Activated CD8-positive, alpha-beta T cell treated with anti-CD3 and anti-CD28 coated beads for 36 hours (primary cell): ENCODE measurements at regions of chr17 and their contacts with region 1.

Region 1: GRCh38 chr17:39199820-39200069 is 338 bp upstream of the RPL19 start:
- DNase-seq: peak; percentile 98
- ATAC-seq: peak; percentile 64
- H3K4me3 Mint-ChIP-seq: peak overlapping the region; percentile 90
- H3K27ac Mint-ChIP-seq: peak overlapping the region; percentile 99
- H3K4me1 Mint-ChIP-seq: peaks cover 53% of the 10 kb centered on the region
- H3K27me3 Mint-ChIP-seq: no peaks in the 10 kb centered on the region
- CTCF ChIP-seq: no peak

Region 2: DNA sequence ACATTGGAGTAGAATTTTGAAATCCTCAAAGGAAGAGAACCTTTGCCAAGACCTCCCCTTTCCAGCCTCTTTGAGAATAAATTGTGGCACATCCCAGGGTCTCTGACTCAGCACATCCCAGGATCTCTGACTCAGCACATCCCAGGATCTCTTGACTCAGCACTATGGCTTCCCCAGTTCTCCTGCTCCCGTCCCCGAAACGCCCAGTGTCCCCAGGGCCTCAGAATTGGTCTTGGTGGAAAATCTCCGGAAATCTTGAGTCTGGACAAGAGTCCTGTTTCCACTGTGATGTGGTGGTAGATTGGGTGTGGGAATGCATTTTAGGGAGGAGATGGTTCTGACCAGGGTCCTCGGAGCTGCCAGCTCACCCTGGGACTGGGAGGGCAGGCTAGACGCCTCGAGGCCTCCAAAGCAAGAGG is 67.5 kb before region 1 on chr17:
- CTCF ChIA-PET with region 1: no interaction called
- POLR2A ChIA-PET with region 1: no interaction called
- intact Hi-C with region 1: no loop called
- DNase-seq: no peak
- ATAC-seq: no peak
- H3K4me3 Mint-ChIP-seq: no peak overlapping the region
- H3K27ac Mint-ChIP-seq: no peak overlapping the region
- H3K4me1 Mint-ChIP-seq: no peaks in the 10 kb centered on the region
- H3K27me3 Mint-ChIP-seq: no peaks in the 10 kb centered on the region
- CTCF ChIP-seq: no peak

Region 3: GRCh38 chr17:39306509-39307212 is 106.9 kb after region 1 on chr17:
- CTCF ChIA-PET with region 1: no interaction called
- POLR2A ChIA-PET with region 1: no interaction called
- intact Hi-C with region 1: no loop called
- DNase-seq: no peak
- ATAC-seq: no peak
- H3K4me3 Mint-ChIP-seq: no peak overlapping the region
- H3K27ac Mint-ChIP-seq: no peak overlapping the region
- H3K4me1 Mint-ChIP-seq: peaks cover 8% of the 10 kb centered on the region
- H3K27me3 Mint-ChIP-seq: no peaks in the 10 kb centered on the region
- CTCF ChIP-seq: no peak

Region 4: GRCh38 chr17:39401412-39402243 is 201.9 kb after region 1 on chr17 and contains the start of gene FBXL20:
- CTCF ChIA-PET with region 1: no interaction called
- POLR2A ChIA-PET with region 1: no interaction called
- intact Hi-C with region 1: loop called (anchors 10 kb)
- DNase-seq: peak; percentile 94
- ATAC-seq: peak; percentile 71
- H3K4me3 Mint-ChIP-seq: peak within 1 kb of the TSS; percentile 99
- H3K27ac Mint-ChIP-seq: peak within 1 kb of the TSS; percentile 98
- H3K4me1 Mint-ChIP-seq: peaks cover 57% of the 10 kb centered on the region
- H3K27me3 Mint-ChIP-seq: no peaks in the 10 kb centered on the region
- CTCF ChIP-seq: no peak
- total RNA-seq, gene FBXL20: 17.7 to 19.1 TPM